ENCODE measurements at regions of chr11 and their contacts with region 1.

Region 1: GRCh38 chr11:72030472-72031045 is 31.9 kb downstream of the IL18BP start:
- DNase-seq: no peak
- H3K4me3 Mint-ChIP-seq: no peak overlapping the region
- H3K27ac Mint-ChIP-seq: peak overlapping the region; percentile 27
- H3K4me1 Mint-ChIP-seq: peaks cover under 1% of the 10 kb centered on the region
- H3K27me3 Mint-ChIP-seq: no peaks in the 10 kb centered on the region
- CTCF ChIP-seq: no peak

Region 2: DNA sequence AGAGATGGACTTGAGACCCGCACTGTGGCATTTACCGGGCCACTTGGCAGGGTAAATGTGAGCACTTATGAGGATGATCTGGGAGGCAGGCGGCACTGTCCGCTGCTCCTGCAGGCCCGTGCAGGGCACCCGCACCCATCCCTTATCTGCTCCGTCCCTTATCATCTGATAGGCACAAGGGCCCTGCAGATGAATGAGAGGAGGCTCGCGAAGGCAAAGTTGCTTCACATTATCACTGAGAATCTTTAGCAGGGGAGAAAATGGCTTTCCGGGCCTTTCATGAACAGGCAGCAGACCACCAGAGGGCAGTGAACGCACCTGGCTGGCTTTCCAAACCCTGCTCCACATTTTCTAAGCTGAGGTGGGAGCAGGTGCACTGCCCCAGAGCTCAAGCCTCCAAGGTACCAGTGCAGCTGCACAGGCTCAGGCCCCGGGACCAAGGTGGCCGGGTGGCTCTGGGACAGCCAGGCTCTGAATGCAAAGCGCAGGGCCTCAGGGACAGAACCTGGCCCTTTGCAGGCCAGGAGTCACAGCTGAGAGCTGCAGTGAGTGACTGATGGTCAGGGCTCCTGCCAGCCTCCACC is 943.8 kb before region 1 on chr11:
- CTCF ChIA-PET with region 1: no interaction called
- POLR2A ChIA-PET with region 1: no interaction called
- intact Hi-C with region 1: no loop called
- DNase-seq: peak; percentile 7
- H3K4me3 Mint-ChIP-seq: no peak overlapping the region
- H3K27ac Mint-ChIP-seq: no peak overlapping the region
- H3K4me1 Mint-ChIP-seq: no peaks in the 10 kb centered on the region
- H3K27me3 Mint-ChIP-seq: no peaks in the 10 kb centered on the region
- CTCF ChIP-seq: no peak

Region 3: GRCh38 chr11:71962428-71963038 is 68.0 kb before region 1 on chr11:
- CTCF ChIA-PET with region 1: no interaction called
- POLR2A ChIA-PET with region 1: no interaction called
- intact Hi-C with region 1: no loop called
- DNase-seq: no peak
- H3K4me3 Mint-ChIP-seq: no peak overlapping the region
- H3K27ac Mint-ChIP-seq: no peak overlapping the region
- H3K4me1 Mint-ChIP-seq: no peaks in the 10 kb centered on the region
- H3K27me3 Mint-ChIP-seq: no peaks in the 10 kb centered on the region
- CTCF ChIP-seq: no peak

Region 4: GRCh38 chr11:72040726-72041441 is 10.3 kb after region 1 on chr11:
- CTCF ChIA-PET with region 1: interaction called, 81 read pairs
- POLR2A ChIA-PET with region 1: interaction called, 26 read pairs
- intact Hi-C with region 1: no loop called
- DNase-seq: peak; percentile 91
- H3K4me3 Mint-ChIP-seq: no peak overlapping the region
- H3K27ac Mint-ChIP-seq: no peak overlapping the region
- H3K4me1 Mint-ChIP-seq: peaks cover 26% of the 10 kb centered on the region
- H3K27me3 Mint-ChIP-seq: no peaks in the 10 kb centered on the region
- CTCF ChIP-seq: no peak

Region 5: DNA sequence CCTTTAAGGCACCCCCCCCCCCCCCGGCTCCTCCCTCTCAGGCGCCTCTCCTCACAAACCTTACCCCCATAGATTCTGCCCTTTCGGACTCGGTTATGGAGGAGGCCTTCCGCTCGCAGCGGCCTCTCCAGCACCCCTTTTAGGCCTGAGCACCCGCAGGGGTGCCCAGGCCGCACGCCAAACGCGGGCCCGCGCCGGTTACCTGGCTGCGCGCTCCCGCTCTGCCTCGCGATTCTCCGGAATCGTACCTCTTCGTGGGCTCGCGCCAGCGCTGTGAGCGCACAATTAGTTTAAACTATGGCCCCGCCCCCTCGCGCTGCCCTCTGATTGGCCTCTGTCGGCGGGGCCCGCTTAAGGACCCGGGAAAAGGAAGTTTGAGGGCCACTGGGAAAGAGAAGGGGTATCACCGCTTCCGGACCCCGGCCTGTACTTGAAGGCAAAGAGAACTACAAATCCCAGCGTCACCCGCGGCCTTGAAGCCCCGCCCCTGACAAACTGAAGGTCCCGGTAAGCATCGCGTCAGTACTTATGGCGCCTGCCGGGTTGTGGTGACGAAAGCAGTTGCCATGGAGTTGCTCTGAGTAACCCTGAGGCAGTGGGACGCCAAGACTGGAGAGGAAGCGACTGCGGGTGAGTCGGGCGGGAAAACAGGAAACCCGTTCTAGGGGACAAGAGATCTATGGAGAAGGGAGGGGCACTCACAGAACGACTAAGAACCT is 49.9 kb after region 1 on chr11 and contains the starts of genes LRRC51 and NUMA1:
- CTCF ChIA-PET with region 1: interaction called, 45 read pairs
- POLR2A ChIA-PET with region 1: interaction called, 282 read pairs
- intact Hi-C with region 1: no loop called
- DNase-seq: peak; percentile 100
- H3K4me3 Mint-ChIP-seq: peak within 1 kb of the TSS; percentile 99
- H3K27ac Mint-ChIP-seq: peak within 1 kb of the TSS; percentile 99
- H3K4me1 Mint-ChIP-seq: peaks cover 48% of the 10 kb centered on the region
- H3K27me3 Mint-ChIP-seq: no peaks in the 10 kb centered on the region
- CTCF ChIP-seq: no peak
- total RNA-seq, gene LRRC51: 9.3 and 9.5 TPM in 2 replicates
- total RNA-seq, gene NUMA1: 109 and 113 TPM in 2 replicates

Region 6: GRCh38 chr11:72091005-72091691 is 60.6 kb after region 1 on chr11:
- CTCF ChIA-PET with region 1: interaction called, 155 read pairs
- POLR2A ChIA-PET with region 1: interaction called, 26 read pairs
- intact Hi-C with region 1: loop called (anchors 1 kb)
- DNase-seq: peak; percentile 69
- H3K4me3 Mint-ChIP-seq: no peak overlapping the region
- H3K27ac Mint-ChIP-seq: peak overlapping the region; percentile 70
- H3K4me1 Mint-ChIP-seq: no peaks in the 10 kb centered on the region
- H3K27me3 Mint-ChIP-seq: no peaks in the 10 kb centered on the region
- CTCF ChIP-seq: peak; percentile 77

Region 7: DNA sequence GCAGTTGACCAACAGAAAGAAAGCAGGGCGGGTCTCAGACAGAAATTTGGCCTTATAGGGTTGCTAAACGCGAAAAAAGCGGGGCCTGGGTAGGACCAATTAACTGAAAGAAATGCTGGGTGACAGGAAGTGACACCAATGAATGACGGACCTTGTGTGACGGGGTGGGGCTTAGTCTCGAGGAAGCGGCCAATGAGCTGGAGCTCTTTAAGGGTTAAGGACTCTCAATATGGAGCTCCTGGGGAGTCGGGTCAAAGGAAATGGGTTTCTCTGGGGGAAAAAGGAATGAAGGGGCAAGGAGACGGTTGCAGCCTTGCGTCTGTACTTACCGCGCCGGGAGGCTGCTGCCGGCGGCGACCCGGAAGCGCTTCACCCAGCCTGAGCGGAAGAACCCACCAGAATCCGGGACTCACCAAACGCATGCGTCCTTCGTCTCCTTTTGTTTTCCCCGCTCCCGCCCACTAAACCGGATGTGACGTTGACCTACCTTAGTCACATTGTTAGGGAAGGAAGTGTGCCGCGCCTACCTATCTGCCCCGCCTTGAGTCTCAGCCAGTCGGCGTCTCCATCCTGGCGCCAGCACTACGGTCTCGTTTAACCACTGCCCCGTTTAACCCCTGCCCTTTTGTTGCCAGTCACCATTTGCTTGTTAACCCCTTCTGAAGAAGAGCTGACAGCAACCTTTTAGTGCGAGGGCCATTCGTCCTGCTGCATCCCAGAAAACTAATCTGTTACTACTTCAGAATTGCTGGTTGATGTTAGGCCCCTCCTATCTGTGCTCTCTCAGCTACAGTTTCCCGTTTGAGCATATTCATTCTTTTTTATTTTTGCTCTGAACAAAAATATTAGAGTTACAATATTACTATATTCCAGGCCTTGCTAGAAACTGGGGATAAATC is 82.0 kb after region 1 on chr11 and contains the start of gene ANAPC15:
- CTCF ChIA-PET with region 1: interaction called, 5 read pairs
- POLR2A ChIA-PET with region 1: interaction called, 11 read pairs
- intact Hi-C with region 1: no loop called
- DNase-seq: peak; percentile 100
- H3K4me3 Mint-ChIP-seq: peak within 1 kb of the TSS; percentile 98
- H3K27ac Mint-ChIP-seq: peak within 1 kb of the TSS; percentile 100
- H3K4me1 Mint-ChIP-seq: peaks cover 20% of the 10 kb centered on the region
- H3K27me3 Mint-ChIP-seq: no peaks in the 10 kb centered on the region
- CTCF ChIP-seq: no peak
- total RNA-seq, gene ANAPC15: 52.2 and 63.6 TPM in 2 replicates

Region 8: GRCh38 chr11:72430741-72431570 is 400.4 kb after region 1 on chr11:
- CTCF ChIA-PET with region 1: interaction called, 9 read pairs
- POLR2A ChIA-PET with region 1: interaction called, 4 read pairs
- intact Hi-C with region 1: loop called (anchors 5 kb)
- DNase-seq: peak; percentile 51
- H3K4me3 Mint-ChIP-seq: no peak overlapping the region
- H3K27ac Mint-ChIP-seq: no peak overlapping the region
- H3K4me1 Mint-ChIP-seq: peaks cover 28% of the 10 kb centered on the region
- H3K27me3 Mint-ChIP-seq: no peaks in the 10 kb centered on the region
- CTCF ChIP-seq: peak; percentile 81

Region 9: GRCh38 chr11:72519220-72519881 is 488.8 kb after region 1 on chr11:
- CTCF ChIA-PET with region 1: no interaction called
- POLR2A ChIA-PET with region 1: no interaction called
- intact Hi-C with region 1: no loop called
- DNase-seq: no peak
- H3K4me3 Mint-ChIP-seq: no peak overlapping the region
- H3K27ac Mint-ChIP-seq: no peak overlapping the region
- H3K4me1 Mint-ChIP-seq: no peaks in the 10 kb centered on the region
- H3K27me3 Mint-ChIP-seq: no peaks in the 10 kb centered on the region
- CTCF ChIP-seq: no peak